Activated CD4-positive, alpha-beta T cell treated with anti-CD3 and anti-CD28 coated beads, Interleukin-2, amount 10 ng/mL, durations not matched to agents 24 days and 14 days (primary cell): ENCODE measurements at regions of chr12 and their contacts with region 1.

Region 1: GRCh38 chr12:4148418-4149056 is 125.0 kb upstream of the CCND2 start:
- DNase-seq: no peak
- H3K4me3 Mint-ChIP-seq: no peak overlapping the region
- H3K27ac Mint-ChIP-seq: peak overlapping the region; percentile 80
- H3K4me1 Mint-ChIP-seq: peaks cover 89% of the 10 kb centered on the region
- H3K27me3 Mint-ChIP-seq: no peaks in the 10 kb centered on the region

Region 2: GRCh38 chr12:2998789-2999264 is 1149.7 kb before region 1 on chr12:
- intact Hi-C with region 1: no loop called
- DNase-seq: no peak
- H3K4me3 Mint-ChIP-seq: no peak overlapping the region
- H3K27ac Mint-ChIP-seq: no peak overlapping the region
- H3K4me1 Mint-ChIP-seq: no peaks in the 10 kb centered on the region
- H3K27me3 Mint-ChIP-seq: no peaks in the 10 kb centered on the region

Region 3: GRCh38 chr12:3837049-3837448 is 311.5 kb before region 1 on chr12:
- intact Hi-C with region 1: no loop called
- DNase-seq: no peak
- H3K4me3 Mint-ChIP-seq: no peak overlapping the region
- H3K27ac Mint-ChIP-seq: peak overlapping the region; percentile 31
- H3K4me1 Mint-ChIP-seq: peaks cover 28% of the 10 kb centered on the region
- H3K27me3 Mint-ChIP-seq: no peaks in the 10 kb centered on the region

Region 4: GRCh38 chr12:3872800-3873636 is 275.5 kb before region 1 on chr12 and contains the start of gene PARP11:
- intact Hi-C with region 1: loop called (anchors 1 kb)
- DNase-seq: peak; percentile 100
- H3K4me3 Mint-ChIP-seq: peak within 1 kb of the TSS; percentile 92
- H3K27ac Mint-ChIP-seq: peak within 1 kb of the TSS; percentile 90
- H3K4me1 Mint-ChIP-seq: peaks cover 44% of the 10 kb centered on the region
- H3K27me3 Mint-ChIP-seq: no peaks in the 10 kb centered on the region
- total RNA-seq, gene PARP11: 11.4 and 14.8 TPM in 2 replicates

Region 5: DNA sequence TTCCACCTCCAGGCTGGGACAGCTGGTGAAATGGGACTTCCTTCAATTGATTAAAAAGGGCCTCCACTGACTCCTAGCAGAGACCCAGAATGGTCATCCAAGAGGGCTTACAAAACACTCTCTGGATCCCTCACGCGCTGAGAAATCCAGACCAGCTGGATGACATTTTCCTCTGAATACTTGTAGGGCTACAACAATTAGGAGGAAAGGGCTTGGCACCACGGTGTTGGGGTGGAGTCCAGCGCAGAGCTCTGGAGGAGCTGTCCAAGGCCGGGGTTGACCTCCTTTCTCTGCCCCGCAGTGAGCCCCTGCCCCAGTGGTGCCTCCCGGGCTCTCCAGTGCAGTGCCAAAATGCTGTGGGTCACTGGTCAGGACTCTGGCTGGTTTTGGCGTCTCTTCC is 64.0 kb before region 1 on chr12:
- intact Hi-C with region 1: no loop called
- DNase-seq: no peak
- H3K4me3 Mint-ChIP-seq: no peak overlapping the region
- H3K27ac Mint-ChIP-seq: no peak overlapping the region
- H3K4me1 Mint-ChIP-seq: peaks cover 2% of the 10 kb centered on the region
- H3K27me3 Mint-ChIP-seq: peaks cover 5% of the 10 kb centered on the region

Region 6: GRCh38 chr12:4107436-4107878 is 41.1 kb before region 1 on chr12:
- intact Hi-C with region 1: loop called (anchors 1 kb)
- DNase-seq: peak; percentile 93
- H3K4me3 Mint-ChIP-seq: peak overlapping the region; percentile 47
- H3K27ac Mint-ChIP-seq: peak overlapping the region; percentile 83
- H3K4me1 Mint-ChIP-seq: peaks cover 42% of the 10 kb centered on the region
- H3K27me3 Mint-ChIP-seq: peaks cover 2% of the 10 kb centered on the region

Region 7: GRCh38 chr12:4135919-4136605 is 12.5 kb before region 1 on chr12:
- intact Hi-C with region 1: loop called (anchors 1 kb)
- DNase-seq: peak; percentile 75
- H3K4me3 Mint-ChIP-seq: peak overlapping the region; percentile 5
- H3K27ac Mint-ChIP-seq: peak overlapping the region; percentile 91
- H3K4me1 Mint-ChIP-seq: peaks cover 46% of the 10 kb centered on the region
- H3K27me3 Mint-ChIP-seq: no peaks in the 10 kb centered on the region

Region 8: GRCh38 chr12:4178424-4179170 is 30.1 kb after region 1 on chr12:
- intact Hi-C with region 1: loop called (anchors 1 kb)
- DNase-seq: peak; percentile 67
- H3K4me3 Mint-ChIP-seq: peak overlapping the region; percentile 55
- H3K27ac Mint-ChIP-seq: peak overlapping the region; percentile 92
- H3K4me1 Mint-ChIP-seq: peaks cover 21% of the 10 kb centered on the region
- H3K27me3 Mint-ChIP-seq: no peaks in the 10 kb centered on the region

Region 9: GRCh38 chr12:4506870-4507269 is 358.3 kb after region 1 on chr12:
- intact Hi-C with region 1: loop called (anchors 10 kb)
- DNase-seq: peak; percentile 83
- H3K4me3 Mint-ChIP-seq: peak overlapping the region; percentile 55
- H3K27ac Mint-ChIP-seq: peak overlapping the region; percentile 59
- H3K4me1 Mint-ChIP-seq: peaks cover 20% of the 10 kb centered on the region
- H3K27me3 Mint-ChIP-seq: no peaks in the 10 kb centered on the region